ENCODE measurements at regions of chr9 and their contacts with region 1.

Region 1: GRCh38 chr9:38263532-38263931 is 129.0 kb upstream of the ALDH1B1 start:
- DNase-seq: no peak
- ATAC-seq: peak; percentile 34
- H3K4me3 ChIP-seq: no peak overlapping the region
- H3K27ac ChIP-seq: no peak overlapping the region
- H3K4me1 ChIP-seq: no peaks in the 10 kb centered on the region
- H3K27me3 ChIP-seq: no peaks in the 10 kb centered on the region
- CTCF ChIP-seq: no peak

Region 2: DNA sequence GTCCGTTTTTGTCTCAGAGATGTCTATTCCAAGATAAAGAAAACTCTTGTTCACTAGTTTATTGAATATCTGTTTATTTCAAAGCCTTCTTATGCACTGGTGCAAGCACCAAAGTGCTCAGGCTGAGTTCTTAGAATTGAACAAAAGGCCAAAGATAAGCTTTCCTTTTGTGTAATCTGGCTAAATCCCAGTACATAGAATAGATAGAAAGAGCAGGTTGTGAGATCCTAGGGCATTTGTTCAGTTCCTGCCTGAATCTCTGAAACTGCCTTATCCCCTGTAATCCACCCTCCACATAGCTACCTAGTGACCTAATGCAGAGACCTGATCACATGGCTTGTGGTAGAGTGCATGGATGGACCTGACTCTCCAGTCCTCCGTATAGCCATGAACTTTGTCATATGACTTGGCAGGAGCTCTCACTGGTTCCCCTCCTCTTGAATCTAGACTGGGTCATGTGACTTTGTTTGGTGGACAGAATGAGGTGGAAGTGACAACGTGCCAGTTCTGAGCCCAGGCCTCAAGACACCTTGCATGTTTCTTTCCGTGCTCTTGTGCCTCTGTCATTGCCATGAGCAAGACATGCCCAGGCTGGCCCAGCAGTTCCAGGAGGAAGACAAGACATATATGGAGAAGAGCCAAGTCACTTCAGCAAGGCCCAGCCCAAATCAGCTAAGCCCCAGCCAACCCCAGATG is 55.2 kb before region 1 on chr9:
- intact Hi-C with region 1: loop called (anchors 10 kb)
- DNase-seq: no peak
- ATAC-seq: peak; percentile 31
- H3K4me3 ChIP-seq: no peak overlapping the region
- H3K27ac ChIP-seq: no peak overlapping the region
- H3K4me1 ChIP-seq: no peaks in the 10 kb centered on the region
- H3K27me3 ChIP-seq: no peaks in the 10 kb centered on the region
- CTCF ChIP-seq: no peak